Heart left ventricle (tissue), 16 donors: ENCODE measurements at regions of chr1 and their contacts with region 1.

Region 1: GRCh38 chr1:11262171-11263049 is at the start of gene MTOR:
- DNase-seq: peak; percentile 97 to 100 (median 99)
- ATAC-seq: peak; percentile 99 to 100 (median 100)
- H3K4me3 ChIP-seq: peak within 1 kb of the TSS; percentile 64 to 100 (median 96)
- H3K27ac ChIP-seq: peak within 1 kb of the TSS in 11 of 12 donors; percentile 65 to 92 (median 85)
- H3K4me1 ChIP-seq: peaks cover 0 to 19% (median 12%) of the 10 kb centered on the region in 12 donors
- H3K27me3 ChIP-seq: no peaks in the 10 kb centered on the region
- CTCF ChIP-seq: peak in 2 of 12 donors; percentile 20 to 36
- POLR2A ChIP-seq: peak; percentile 50 to 82
- total RNA-seq, gene MTOR: 26.3 to 43.6 (median 40.6) TPM

Region 2: GRCh38 chr1:11037740-11038182 is 224.6 kb before region 1 on chr1:
- intact Hi-C with region 1: no loop called
- DNase-seq: peak; percentile 80 to 92 (median 86)
- ATAC-seq: peak; percentile 88 to 97 (median 94)
- H3K4me3 ChIP-seq: peak overlapping the region in 1 of 12 donors; percentile 27
- H3K27ac ChIP-seq: no peak overlapping the region
- H3K4me1 ChIP-seq: peaks cover 0 to 9% (median 6%) of the 10 kb centered on the region in 12 donors
- H3K27me3 ChIP-seq: no peaks in the 10 kb centered on the region
- CTCF ChIP-seq: peak; percentile 87 to 99 (median 97)
- POLR2A ChIP-seq: no peak

Region 3: DNA sequence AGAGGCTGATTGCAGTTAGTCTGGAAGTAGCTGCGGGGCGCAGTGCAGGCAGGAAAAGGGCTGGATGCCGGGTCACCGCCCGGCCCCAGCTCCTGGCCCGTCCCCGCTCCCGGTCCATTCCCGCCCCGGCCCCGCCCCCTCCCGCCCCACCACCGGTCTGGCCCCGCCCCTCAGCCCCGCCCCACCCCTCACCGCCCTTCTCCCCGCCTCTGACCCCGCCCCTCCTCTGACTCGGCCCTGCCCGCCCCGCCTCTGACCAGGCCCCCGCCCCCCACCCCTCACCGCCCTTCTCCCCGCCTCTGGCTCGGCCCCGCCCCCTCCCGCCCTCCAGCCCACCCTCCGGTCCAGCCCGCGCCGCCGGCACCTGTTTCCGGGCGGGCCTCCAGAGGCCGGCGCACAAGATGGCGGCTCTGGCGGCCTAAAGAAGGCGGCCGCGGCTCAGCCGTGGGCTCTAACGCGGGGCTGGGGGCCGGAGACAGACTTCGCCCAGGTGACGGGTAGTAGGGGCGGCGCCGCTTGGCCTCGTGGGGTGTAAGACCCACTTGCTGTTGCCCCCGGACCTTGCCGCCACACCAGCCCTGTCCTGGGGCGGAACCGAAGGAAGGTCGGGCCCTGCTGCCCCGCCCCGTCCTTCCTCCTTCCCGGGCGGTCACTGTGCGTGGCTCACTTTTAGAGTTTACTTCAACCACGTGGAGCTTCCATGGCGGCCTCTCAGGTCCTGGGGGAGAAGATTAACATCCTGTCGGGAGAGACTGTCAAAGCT is 10.6 kb after region 1 on chr1 and contains the start of gene UBIAD1:
- intact Hi-C with region 1: loop called in 2 of 10 experiments (anchors 1 kb)
- DNase-seq: peak; percentile 84 to 93 (median 91)
- ATAC-seq: peak; percentile 83 to 96 (median 96)
- H3K4me3 ChIP-seq: peak within 1 kb of the TSS; percentile 65 to 97 (median 86)
- H3K27ac ChIP-seq: peak within 1 kb of the TSS; percentile 91 to 99 (median 96)
- H3K4me1 ChIP-seq: peaks cover 8 to 35% (median 23%) of the 10 kb centered on the region in 12 donors
- H3K27me3 ChIP-seq: no peaks in the 10 kb centered on the region
- CTCF ChIP-seq: peak in 6 of 12 donors; percentile 11 to 50 (median 34)
- POLR2A ChIP-seq: peak in 1 of 2 donors; percentile 54
- total RNA-seq, gene UBIAD1: 10.2 to 17.3 (median 11.6) TPM